ENCODE measurements at regions of chr10 and their contacts with region 1.

Region 1: DNA sequence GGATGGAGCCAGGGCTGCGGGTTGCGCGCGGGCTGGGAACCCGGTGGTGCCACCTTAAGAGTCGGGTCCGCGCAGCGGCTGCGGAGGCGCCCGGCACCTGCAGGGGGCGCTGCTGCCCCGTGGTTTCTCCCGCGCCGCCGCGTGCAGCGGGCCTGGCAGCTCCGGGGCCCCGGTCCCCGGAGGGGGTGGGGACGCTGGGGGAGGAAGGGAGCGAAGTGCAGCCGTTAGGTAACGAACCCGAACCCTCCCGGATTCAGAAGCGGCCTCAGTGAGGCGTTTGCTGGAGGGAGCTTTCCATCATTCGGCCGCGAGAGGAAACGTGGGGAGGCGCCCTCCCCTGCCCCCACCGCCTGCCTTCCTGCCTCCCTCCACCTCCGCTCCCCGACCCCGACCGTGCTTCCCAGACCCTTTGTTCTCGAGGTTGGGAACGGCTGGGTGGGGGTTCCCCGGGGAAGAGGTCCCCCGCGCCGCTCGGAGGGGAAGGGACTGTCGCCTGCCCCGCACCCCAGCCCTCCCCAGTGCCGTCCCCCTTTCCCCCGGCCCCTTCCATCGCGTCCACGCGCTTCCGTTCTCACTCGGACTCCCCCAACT is 29.6 kb downstream of the SKIDA1 start:
- DNase-seq: peak; percentile 90
- ATAC-seq: peak; percentile 79
- H3K4me3 Mint-ChIP-seq: peak overlapping the region; percentile 85
- H3K27ac Mint-ChIP-seq: no peak overlapping the region
- H3K4me1 Mint-ChIP-seq: peaks cover 36% of the 10 kb centered on the region
- H3K27me3 Mint-ChIP-seq: peaks cover 51% of the 10 kb centered on the region
- CTCF ChIP-seq: peak; percentile 79

Region 2: GRCh38 chr10:21315645-21316281 is 180.1 kb before region 1 on chr10:
- CTCF ChIA-PET with region 1: no interaction called
- POLR2A ChIA-PET with region 1: no interaction called
- intact Hi-C with region 1: no loop called
- DNase-seq: no peak
- ATAC-seq: no peak
- H3K4me3 Mint-ChIP-seq: no peak overlapping the region
- H3K27ac Mint-ChIP-seq: no peak overlapping the region
- H3K4me1 Mint-ChIP-seq: no peaks in the 10 kb centered on the region
- H3K27me3 Mint-ChIP-seq: no peaks in the 10 kb centered on the region
- CTCF ChIP-seq: no peak

Region 3: DNA sequence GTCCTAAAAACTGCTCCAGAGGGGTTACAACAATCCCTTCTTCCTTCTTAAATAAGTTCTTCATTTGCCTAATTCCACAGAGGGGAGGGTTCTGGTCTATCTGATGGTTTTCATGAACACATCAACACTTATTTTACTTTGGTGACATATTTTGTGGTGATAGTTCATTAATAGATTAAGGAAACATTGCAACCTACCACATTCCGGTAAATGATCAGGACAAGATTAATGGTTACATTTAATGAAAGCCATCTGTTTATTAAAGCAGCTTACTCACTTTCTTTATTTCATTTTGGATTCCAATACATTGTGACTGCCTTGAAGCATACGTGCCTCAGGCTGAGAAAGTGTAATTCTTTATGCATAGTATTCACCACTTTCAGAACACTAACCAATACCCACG is 71.4 kb before region 1 on chr10:
- CTCF ChIA-PET with region 1: no interaction called
- POLR2A ChIA-PET with region 1: no interaction called
- intact Hi-C with region 1: no loop called
- DNase-seq: no peak
- ATAC-seq: no peak
- H3K4me3 Mint-ChIP-seq: no peak overlapping the region
- H3K27ac Mint-ChIP-seq: no peak overlapping the region
- H3K4me1 Mint-ChIP-seq: no peaks in the 10 kb centered on the region
- H3K27me3 Mint-ChIP-seq: peaks cover 3% of the 10 kb centered on the region
- CTCF ChIP-seq: no peak

Region 4: GRCh38 chr10:21516242-21517131 is 20.6 kb after region 1 on chr10:
- CTCF ChIA-PET with region 1: interaction called, 7 read pairs
- POLR2A ChIA-PET with region 1: interaction called, 10 read pairs
- intact Hi-C with region 1: loop called (anchors 1 kb)
- DNase-seq: peak; percentile 48
- ATAC-seq: peak; percentile 79
- H3K4me3 Mint-ChIP-seq: peak overlapping the region; percentile 82
- H3K27ac Mint-ChIP-seq: no peak overlapping the region
- H3K4me1 Mint-ChIP-seq: peaks cover 38% of the 10 kb centered on the region
- H3K27me3 Mint-ChIP-seq: peaks cover 76% of the 10 kb centered on the region
- CTCF ChIP-seq: no peak

Region 5: GRCh38 chr10:21675157-21675796 is 179.4 kb after region 1 on chr10:
- CTCF ChIA-PET with region 1: no interaction called
- POLR2A ChIA-PET with region 1: no interaction called
- intact Hi-C with region 1: loop called (anchors 1 kb)
- DNase-seq: no peak
- ATAC-seq: peak; percentile 31
- H3K4me3 Mint-ChIP-seq: no peak overlapping the region
- H3K27ac Mint-ChIP-seq: no peak overlapping the region
- H3K4me1 Mint-ChIP-seq: peaks cover 6% of the 10 kb centered on the region
- H3K27me3 Mint-ChIP-seq: no peaks in the 10 kb centered on the region
- CTCF ChIP-seq: peak; percentile 83

Region 6: GRCh38 chr10:21989453-21990154 is 493.8 kb after region 1 on chr10:
- CTCF ChIA-PET with region 1: interaction called, 16 read pairs
- POLR2A ChIA-PET with region 1: no interaction called
- intact Hi-C with region 1: loop called (anchors 2 kb)
- DNase-seq: no peak
- ATAC-seq: peak; percentile 68
- H3K4me3 Mint-ChIP-seq: no peak overlapping the region
- H3K27ac Mint-ChIP-seq: no peak overlapping the region
- H3K4me1 Mint-ChIP-seq: no peaks in the 10 kb centered on the region
- H3K27me3 Mint-ChIP-seq: no peaks in the 10 kb centered on the region
- CTCF ChIP-seq: no peak

Region 7: GRCh38 chr10:22251751-22252223 is 755.9 kb after region 1 on chr10:
- CTCF ChIA-PET with region 1: interaction called, 6 read pairs
- POLR2A ChIA-PET with region 1: no interaction called
- intact Hi-C with region 1: loop called (anchors 2 kb)
- DNase-seq: peak; percentile 61
- ATAC-seq: peak; percentile 45
- H3K4me3 Mint-ChIP-seq: peak overlapping the region; percentile 97
- H3K27ac Mint-ChIP-seq: peak overlapping the region; percentile 100
- H3K4me1 Mint-ChIP-seq: peaks cover 27% of the 10 kb centered on the region
- H3K27me3 Mint-ChIP-seq: no peaks in the 10 kb centered on the region
- CTCF ChIP-seq: no peak

Region 8: GRCh38 chr10:22550732-22551131 is 1054.9 kb after region 1 on chr10:
- CTCF ChIA-PET with region 1: no interaction called
- POLR2A ChIA-PET with region 1: no interaction called
- intact Hi-C with region 1: loop called (anchors 10 kb)
- DNase-seq: peak; percentile 50
- ATAC-seq: peak; percentile 64
- H3K4me3 Mint-ChIP-seq: no peak overlapping the region
- H3K27ac Mint-ChIP-seq: no peak overlapping the region
- H3K4me1 Mint-ChIP-seq: peaks cover 3% of the 10 kb centered on the region
- H3K27me3 Mint-ChIP-seq: no peaks in the 10 kb centered on the region
- CTCF ChIP-seq: no peak

Region 9: DNA sequence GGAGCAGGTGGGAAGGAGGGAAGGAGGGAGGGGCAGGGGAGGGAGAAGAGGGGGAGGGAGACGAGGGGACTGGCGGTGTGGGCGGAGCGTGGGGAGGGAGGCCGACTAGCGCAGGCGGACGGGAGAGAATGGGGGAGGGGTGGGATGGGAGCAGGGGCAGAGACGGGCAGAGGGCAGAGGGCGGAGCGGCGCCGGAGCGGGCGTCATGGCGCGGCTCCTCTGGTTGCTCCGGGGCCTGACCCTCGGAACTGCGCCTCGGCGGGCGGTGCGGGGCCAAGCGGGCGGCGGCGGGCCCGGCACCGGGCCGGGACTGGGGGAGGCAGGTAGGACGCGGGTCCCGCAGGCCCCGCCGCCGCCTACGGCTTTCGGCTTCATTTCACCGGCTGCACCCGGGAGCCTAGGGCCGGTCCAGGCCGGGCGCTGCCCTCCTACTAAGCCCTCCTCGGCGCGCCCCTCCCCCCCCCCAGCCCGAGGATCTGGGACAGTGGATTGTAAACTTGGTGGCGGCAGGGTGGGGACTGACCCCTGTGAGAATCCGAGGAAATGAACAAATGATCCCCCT is 1599.6 kb after region 1 on chr10 and contains the start of gene MSRB2:
- CTCF ChIA-PET with region 1: no interaction called
- POLR2A ChIA-PET with region 1: no interaction called
- intact Hi-C with region 1: loop called (anchors 10 kb)
- DNase-seq: peak; percentile 47
- ATAC-seq: peak; percentile 81
- H3K4me3 Mint-ChIP-seq: peak within 1 kb of the TSS; percentile 89
- H3K27ac Mint-ChIP-seq: peak within 1 kb of the TSS; percentile 77
- H3K4me1 Mint-ChIP-seq: peaks cover 17% of the 10 kb centered on the region
- H3K27me3 Mint-ChIP-seq: no peaks in the 10 kb centered on the region
- CTCF ChIP-seq: no peak
- total RNA-seq, gene MSRB2: 4.1 and 4.6 TPM in 2 replicates

Measured in activated B cell treated with CpG ODN at 0.5 μM for 24 hours (primary cell).